ENCODE measurements at regions of chrX and their contacts with region 1.

Region 1: GRCh38 chrX:40169193-40170101 is 71.7 kb upstream of the BCOR start:
- DNase-seq: peak; percentile 92
- H3K4me3 ChIP-seq: peak overlapping the region; percentile 74
- H3K27ac ChIP-seq: peak overlapping the region; percentile 100
- H3K4me1 ChIP-seq: peaks cover 81% of the 10 kb centered on the region
- CTCF ChIP-seq: peak; percentile 76

Region 2: DNA sequence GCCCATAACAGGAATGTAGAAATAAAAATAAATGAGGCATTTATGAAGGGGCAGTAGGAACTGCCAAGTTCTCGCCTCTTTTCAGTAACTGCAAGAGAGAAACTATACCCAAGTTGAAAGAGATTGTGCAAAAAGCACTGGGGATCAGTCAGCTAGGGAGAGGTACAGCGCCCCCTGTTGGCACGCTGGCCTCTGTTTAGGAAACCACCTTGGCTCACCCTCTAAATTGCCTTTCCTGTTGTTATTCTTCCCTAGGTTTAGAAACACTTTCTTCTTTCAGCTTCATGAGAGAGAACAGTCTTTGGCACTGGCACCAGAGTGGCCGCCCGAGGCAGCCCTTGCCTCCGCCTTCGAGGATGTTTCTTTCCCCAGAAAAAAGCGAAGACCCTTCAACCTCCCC is 1019.7 kb before region 1 on chrX:
- CTCF ChIA-PET with region 1: no interaction called
- POLR2A ChIA-PET with region 1: no interaction called
- intact Hi-C with region 1: loop called (anchors 10 kb)
- DNase-seq: peak; percentile 65
- H3K4me3 ChIP-seq: no peak overlapping the region
- H3K27ac ChIP-seq: no peak overlapping the region
- H3K4me1 ChIP-seq: peaks cover 9% of the 10 kb centered on the region
- CTCF ChIP-seq: peak; percentile 80

Region 3: DNA sequence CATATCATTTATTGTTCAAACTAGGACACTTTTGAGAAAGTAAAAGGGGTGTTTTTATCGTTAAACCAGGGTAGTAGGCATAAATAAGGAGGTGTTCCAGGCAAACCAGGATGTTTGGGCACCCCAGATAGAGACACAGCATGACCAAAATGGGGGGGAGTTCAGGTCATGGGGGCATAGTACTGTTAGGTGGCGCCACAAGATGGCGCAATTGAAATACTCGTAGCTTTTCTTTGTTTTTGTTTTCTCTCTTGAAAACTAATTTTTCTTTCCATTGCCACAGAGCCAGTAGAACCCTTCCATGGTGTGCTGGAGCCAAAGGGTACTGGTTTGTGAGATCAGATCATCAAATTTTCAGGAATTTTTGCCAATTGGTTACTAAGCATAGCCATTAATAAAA is 355.1 kb before region 1 on chrX:
- CTCF ChIA-PET with region 1: no interaction called
- POLR2A ChIA-PET with region 1: no interaction called
- intact Hi-C with region 1: loop called (anchors 5 kb)
- DNase-seq: peak; percentile 53
- H3K4me3 ChIP-seq: no peak overlapping the region
- H3K27ac ChIP-seq: no peak overlapping the region
- H3K4me1 ChIP-seq: peaks cover 16% of the 10 kb centered on the region
- CTCF ChIP-seq: peak; percentile 74

Region 4: DNA sequence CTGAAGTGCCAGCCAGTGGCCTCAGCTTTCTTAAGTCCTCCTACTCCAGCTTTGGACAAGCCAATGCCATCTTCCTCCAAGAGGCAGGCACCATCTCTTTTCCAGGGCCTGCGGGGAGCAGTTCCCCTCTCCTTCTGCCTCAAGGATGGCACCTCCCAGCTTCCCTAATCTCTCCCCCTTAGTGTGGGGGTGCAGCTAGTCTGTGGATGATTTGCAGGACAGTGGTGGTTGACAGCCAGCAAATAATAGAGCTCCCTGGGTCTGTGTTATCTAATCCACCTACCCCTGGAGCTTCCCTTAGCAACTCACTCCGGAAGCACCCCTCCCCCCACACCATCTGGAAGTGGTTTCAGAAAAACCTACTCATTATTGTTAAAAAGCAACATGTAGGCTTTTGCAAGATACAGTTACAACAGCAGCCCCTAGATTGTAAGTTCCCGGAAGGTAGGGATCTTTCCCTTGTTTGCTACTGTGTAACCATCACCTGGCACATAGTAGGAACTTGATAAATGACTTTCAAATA is 318.8 kb before region 1 on chrX:
- CTCF ChIA-PET with region 1: no interaction called
- POLR2A ChIA-PET with region 1: no interaction called
- intact Hi-C with region 1: no loop called
- DNase-seq: no peak
- H3K4me3 ChIP-seq: no peak overlapping the region
- H3K27ac ChIP-seq: no peak overlapping the region
- H3K4me1 ChIP-seq: peaks cover 22% of the 10 kb centered on the region
- CTCF ChIP-seq: no peak

Region 5: GRCh38 chrX:40013266-40014195 is 155.9 kb before region 1 on chrX:
- CTCF ChIA-PET with region 1: no interaction called
- POLR2A ChIA-PET with region 1: interaction called, 4 read pairs
- intact Hi-C with region 1: loop called (anchors 5 kb)
- DNase-seq: peak; percentile 77
- H3K4me3 ChIP-seq: peak overlapping the region; percentile 73
- H3K27ac ChIP-seq: peak overlapping the region; percentile 0
- H3K4me1 ChIP-seq: peaks cover 27% of the 10 kb centered on the region
- CTCF ChIP-seq: no peak

Region 6: GRCh38 chrX:40153335-40154249 is 15.9 kb before region 1 on chrX:
- CTCF ChIA-PET with region 1: interaction called, 4 read pairs
- POLR2A ChIA-PET with region 1: interaction called, 15 read pairs
- intact Hi-C with region 1: loop called (anchors 2 kb)
- DNase-seq: peak; percentile 79
- H3K4me3 ChIP-seq: peak overlapping the region; percentile 67
- H3K27ac ChIP-seq: peak overlapping the region; percentile 94
- H3K4me1 ChIP-seq: peaks cover 73% of the 10 kb centered on the region
- CTCF ChIP-seq: peak; percentile 38; the same call in 1 of the 2 replicates

Measured in OCI-LY7 (cell line).